Dendritic cell treated with granulocyte-macrophage colony-stimulating factor and Interleukin-4, amounts not matched to agents 40 ng/mL and 50 ng/mL, for 4 days (primary cell): ENCODE measurements at regions of chr18 and their contacts with region 1.

Region 1: DNA sequence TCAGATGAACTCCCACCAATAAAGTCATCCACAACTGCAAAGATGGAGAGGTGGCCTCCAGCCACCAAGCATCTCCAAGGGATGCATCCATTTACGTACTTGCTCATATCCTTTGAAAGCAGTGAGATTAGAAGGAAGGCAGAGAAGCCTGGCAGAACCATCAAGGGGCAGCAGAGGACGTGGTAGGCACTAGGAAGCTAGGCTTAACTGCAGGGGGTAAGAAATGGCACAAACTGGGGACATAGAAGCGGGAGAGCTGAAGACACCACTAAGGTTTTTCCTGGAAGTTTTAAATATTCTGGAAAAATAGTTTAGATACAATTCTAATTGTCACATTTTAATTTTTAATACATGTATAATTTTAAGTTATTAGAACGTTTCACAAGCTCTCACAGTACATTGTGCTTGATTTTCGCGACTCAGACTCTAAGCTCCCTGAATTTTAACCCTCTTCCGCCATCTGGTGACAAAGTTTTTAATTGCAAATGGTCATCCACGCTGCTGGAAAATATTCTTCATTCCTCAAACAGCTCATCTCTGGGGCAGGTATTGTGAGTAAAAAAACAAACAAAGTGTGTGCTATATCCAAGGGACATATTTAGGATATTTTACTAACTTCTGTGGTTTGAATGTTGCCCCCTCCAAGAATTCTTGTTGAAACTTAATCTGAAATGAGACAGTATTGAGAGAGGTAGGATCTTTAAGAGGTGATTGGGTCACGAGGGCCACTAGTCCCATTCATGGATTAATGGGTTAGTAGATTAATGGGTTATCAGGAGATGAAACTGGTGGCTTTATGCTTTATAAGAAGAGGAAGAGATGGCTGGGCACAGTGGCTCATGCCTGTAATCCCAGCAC is 1.6 kb upstream of the PSTPIP2 start:
- H3K4me3 Mint-ChIP-seq: no peak overlapping the region
- H3K27ac Mint-ChIP-seq: peak overlapping the region; percentile 26
- H3K4me1 Mint-ChIP-seq: peaks cover 39% of the 10 kb centered on the region
- H3K27me3 Mint-ChIP-seq: no peaks in the 10 kb centered on the region

Region 2: DNA sequence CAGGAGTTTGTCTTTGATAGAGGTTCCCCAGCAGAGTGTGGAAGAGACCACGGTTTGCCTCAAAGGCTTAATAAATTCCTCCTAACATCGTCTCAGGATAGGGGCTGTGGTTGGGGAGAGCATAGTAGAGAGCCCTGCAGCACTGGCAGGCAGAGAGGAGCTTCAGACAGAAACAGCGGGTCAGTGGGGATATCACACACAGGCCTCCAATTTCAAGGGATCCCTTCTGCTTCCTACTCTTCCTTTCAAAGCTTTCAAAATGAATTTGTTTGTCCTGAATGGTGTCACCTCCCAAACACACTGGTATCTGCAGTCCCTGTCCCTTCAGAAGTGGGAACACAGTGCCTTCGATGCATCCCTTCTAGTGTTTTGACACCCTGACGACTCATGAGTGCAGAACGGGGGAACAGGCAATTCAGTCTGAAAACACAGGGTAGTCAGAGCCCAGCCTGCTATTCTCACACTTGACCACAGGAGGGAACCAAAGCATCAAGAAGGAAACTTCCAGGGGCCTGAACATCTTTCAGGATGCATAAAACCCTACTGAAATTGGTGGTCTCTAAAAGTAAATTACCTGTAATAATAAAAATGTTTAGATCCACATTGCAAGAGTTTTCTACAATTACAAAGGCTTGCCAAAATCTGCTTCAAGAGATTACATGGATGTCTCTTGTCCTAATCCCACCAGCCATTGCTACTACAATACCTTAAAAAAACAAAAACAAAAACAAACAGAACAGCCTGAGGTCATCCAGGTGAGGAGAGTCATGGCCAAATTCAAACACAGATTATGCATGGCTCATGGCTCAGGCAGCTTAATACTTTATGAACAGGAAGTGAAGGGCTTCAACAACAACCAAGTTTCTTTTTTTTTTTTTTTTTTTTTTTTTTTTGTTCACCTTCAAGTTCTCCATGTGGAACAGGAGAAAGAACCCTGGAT is 408.6 kb before region 1 on chr18:
- intact Hi-C with region 1: loop called (anchors 10 kb)
- H3K4me3 Mint-ChIP-seq: no peak overlapping the region
- H3K27ac Mint-ChIP-seq: no peak overlapping the region
- H3K4me1 Mint-ChIP-seq: peaks cover 40% of the 10 kb centered on the region
- H3K27me3 Mint-ChIP-seq: no peaks in the 10 kb centered on the region

Region 3: GRCh38 chr18:45980229-45980628 is 93.5 kb before region 1 on chr18:
- intact Hi-C with region 1: loop called (anchors 5 kb)
- H3K4me3 Mint-ChIP-seq: no peak overlapping the region
- H3K27ac Mint-ChIP-seq: no peak overlapping the region
- H3K4me1 Mint-ChIP-seq: peaks cover 18% of the 10 kb centered on the region
- H3K27me3 Mint-ChIP-seq: no peaks in the 10 kb centered on the region

Region 4: GRCh38 chr18:46013484-46014189 is 60.1 kb before region 1 on chr18:
- intact Hi-C with region 1: loop called (anchors 5 kb)
- H3K4me3 Mint-ChIP-seq: no peak overlapping the region
- H3K27ac Mint-ChIP-seq: peak overlapping the region; percentile 72
- H3K4me1 Mint-ChIP-seq: peaks cover 58% of the 10 kb centered on the region
- H3K27me3 Mint-ChIP-seq: no peaks in the 10 kb centered on the region

Region 5: GRCh38 chr18:46034230-46034629 is 39.5 kb before region 1 on chr18:
- intact Hi-C with region 1: loop called (anchors 5 kb)
- H3K4me3 Mint-ChIP-seq: no peak overlapping the region
- H3K27ac Mint-ChIP-seq: no peak overlapping the region
- H3K4me1 Mint-ChIP-seq: peaks cover 82% of the 10 kb centered on the region
- H3K27me3 Mint-ChIP-seq: peaks cover 7% of the 10 kb centered on the region